ENCODE measurements at regions of chr17 and their contacts with region 1.

Region 1: GRCh38 chr17:76868176-76868668 is at the start of gene MGAT5B:
- DNase-seq: peak; percentile 94
- H3K4me3 ChIP-seq: peak within 1 kb of the TSS; percentile 58
- H3K27ac ChIP-seq: no peak within 1 kb of the TSS
- H3K4me1 ChIP-seq: peaks cover 21% of the 10 kb centered on the region
- CTCF ChIP-seq: peak; percentile 85
- total RNA-seq, gene MGAT5B: 1.3 and 2.5 TPM in 2 replicates

Region 2: GRCh38 chr17:76888661-76889060 is 20.4 kb after region 1 on chr17:
- CTCF ChIA-PET with region 1: no interaction called
- POLR2A ChIA-PET with region 1: no interaction called
- intact Hi-C with region 1: loop called (anchors 1 kb)
- DNase-seq: no peak
- H3K4me3 ChIP-seq: no peak overlapping the region
- H3K27ac ChIP-seq: no peak overlapping the region
- H3K4me1 ChIP-seq: no peaks in the 10 kb centered on the region
- CTCF ChIP-seq: no peak

Region 3: GRCh38 chr17:77054936-77055335 is 186.7 kb after region 1 on chr17:
- CTCF ChIA-PET with region 1: interaction called, 9 read pairs
- POLR2A ChIA-PET with region 1: no interaction called
- intact Hi-C with region 1: loop called (anchors 1 kb)
- DNase-seq: no peak
- H3K4me3 ChIP-seq: no peak overlapping the region
- H3K27ac ChIP-seq: no peak overlapping the region
- H3K4me1 ChIP-seq: peaks cover 6% of the 10 kb centered on the region
- CTCF ChIP-seq: no peak

Region 4: GRCh38 chr17:77068915-77069314 is 200.7 kb after region 1 on chr17:
- CTCF ChIA-PET with region 1: interaction called, 3 read pairs
- POLR2A ChIA-PET with region 1: interaction called, 4 read pairs
- intact Hi-C with region 1: loop called (anchors 1 kb)
- DNase-seq: no peak
- H3K4me3 ChIP-seq: no peak overlapping the region
- H3K27ac ChIP-seq: no peak overlapping the region
- H3K4me1 ChIP-seq: no peaks in the 10 kb centered on the region
- CTCF ChIP-seq: no peak

Measured in OCI-LY7 (cell line).